ENCODE measurements at regions of chr5 and their contacts with region 1.

Region 1: GRCh38 chr5:82165740-82166530 is 112.2 kb downstream of the RPS23 start:
- DNase-seq: peak; percentile 39
- ATAC-seq: peak; percentile 92
- H3K4me3 ChIP-seq: no peak overlapping the region
- H3K27ac ChIP-seq: no peak overlapping the region; the same call in 1 of the 2 replicates
- H3K4me1 ChIP-seq: peaks cover 12% of the 10 kb centered on the region; the same call in 1 of the 2 replicates
- H3K27me3 ChIP-seq: no peaks in the 10 kb centered on the region
- CTCF ChIP-seq: peak; percentile 64 to 90 (median 67)
- EP300 ChIP-seq: no peak
- POLR2A ChIP-seq: no peak
- RAD21 ChIP-seq: peak; percentile 95

Region 2: GRCh38 chr5:81425569-81425968 is 740.4 kb before region 1 on chr5:
- CTCF ChIA-PET with region 1: interaction called, 87 read pairs
- POLR2A ChIA-PET with region 1: interaction called, 7 read pairs
- RAD21 ChIA-PET with region 1: interaction called, 97 read pairs
- SMC1A ChIA-PET with region 1: interaction called, 95 read pairs
- in situ Hi-C with region 1: no loop called
- intact Hi-C with region 1: loop called (anchors 1 kb)
- DNase-seq: no peak
- ATAC-seq: peak; percentile 84
- H3K4me3 ChIP-seq: no peak overlapping the region
- H3K27ac ChIP-seq: no peak overlapping the region
- H3K4me1 ChIP-seq: no peaks in the 10 kb centered on the region
- H3K27me3 ChIP-seq: no peaks in the 10 kb centered on the region
- CTCF ChIP-seq: peak; percentile 36 to 55 (median 48); a peak in 4 of 6 replicates
- EP300 ChIP-seq: no peak
- POLR2A ChIP-seq: no peak
- RAD21 ChIP-seq: peak; percentile 60

Region 3: DNA sequence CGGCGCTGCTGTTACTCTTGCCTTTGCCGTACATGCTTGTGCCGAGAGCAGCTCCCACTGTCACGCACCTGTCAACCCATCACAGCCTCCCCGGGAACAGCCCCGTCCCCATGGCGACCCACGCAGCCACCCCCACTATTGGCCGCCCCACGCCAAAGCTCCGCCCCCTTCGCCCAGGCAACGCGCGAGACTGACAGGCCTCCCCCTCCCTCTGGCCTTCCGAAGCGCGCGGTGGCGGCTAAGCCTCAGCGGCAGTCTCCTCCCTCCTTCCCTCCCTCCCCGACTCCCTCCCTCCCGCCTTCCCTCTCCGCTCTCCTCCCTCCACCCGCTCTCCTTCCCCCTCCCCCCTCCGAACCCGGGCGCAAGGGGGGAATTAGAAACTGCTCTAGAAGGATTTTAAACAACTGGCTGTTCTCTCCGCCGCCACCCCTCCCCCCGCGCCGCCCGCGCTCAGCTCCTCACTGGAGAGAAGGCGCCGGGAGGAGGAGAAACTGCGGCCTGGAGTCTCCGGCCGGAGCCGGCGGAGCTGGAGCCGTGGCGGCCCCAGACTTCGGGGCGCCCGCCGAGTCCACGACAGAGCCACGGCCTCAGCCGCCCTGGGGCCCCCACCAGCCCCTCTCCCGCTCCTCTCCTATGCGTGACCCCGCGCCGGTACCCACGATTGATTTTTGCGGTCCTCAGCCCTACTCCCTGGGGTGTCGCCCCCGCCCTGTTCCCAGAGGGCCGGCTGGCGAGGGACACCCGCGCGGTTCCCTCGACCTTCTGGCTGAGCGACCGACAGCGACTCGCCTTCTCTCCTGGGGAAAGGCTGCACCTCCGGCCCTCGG is 414.7 kb before region 1 on chr5 and contains the start of gene SSBP2:
- CTCF ChIA-PET with region 1: interaction called, 6 read pairs
- POLR2A ChIA-PET with region 1: interaction called, 9 read pairs
- RAD21 ChIA-PET with region 1: interaction called, 46 read pairs
- SMC1A ChIA-PET with region 1: interaction called, 26 read pairs
- in situ Hi-C with region 1: no loop called
- intact Hi-C with region 1: loop called (anchors 2 kb)
- DNase-seq: peak; percentile 95
- ATAC-seq: peak; percentile 82
- H3K4me3 ChIP-seq: peak within 1 kb of the TSS; percentile 81
- H3K27ac ChIP-seq: peak within 1 kb of the TSS; percentile 95
- H3K4me1 ChIP-seq: peaks cover 10% of the 10 kb centered on the region
- H3K27me3 ChIP-seq: no peaks in the 10 kb centered on the region
- CTCF ChIP-seq: no peak
- EP300 ChIP-seq: peak; percentile 60 to 99; a peak in 3 of 4 replicates
- POLR2A ChIP-seq: peak; percentile 85
- RAD21 ChIP-seq: peak; percentile 50
- polyA plus RNA-seq, gene SSBP2: 117 to 120 TPM

Region 4: DNA sequence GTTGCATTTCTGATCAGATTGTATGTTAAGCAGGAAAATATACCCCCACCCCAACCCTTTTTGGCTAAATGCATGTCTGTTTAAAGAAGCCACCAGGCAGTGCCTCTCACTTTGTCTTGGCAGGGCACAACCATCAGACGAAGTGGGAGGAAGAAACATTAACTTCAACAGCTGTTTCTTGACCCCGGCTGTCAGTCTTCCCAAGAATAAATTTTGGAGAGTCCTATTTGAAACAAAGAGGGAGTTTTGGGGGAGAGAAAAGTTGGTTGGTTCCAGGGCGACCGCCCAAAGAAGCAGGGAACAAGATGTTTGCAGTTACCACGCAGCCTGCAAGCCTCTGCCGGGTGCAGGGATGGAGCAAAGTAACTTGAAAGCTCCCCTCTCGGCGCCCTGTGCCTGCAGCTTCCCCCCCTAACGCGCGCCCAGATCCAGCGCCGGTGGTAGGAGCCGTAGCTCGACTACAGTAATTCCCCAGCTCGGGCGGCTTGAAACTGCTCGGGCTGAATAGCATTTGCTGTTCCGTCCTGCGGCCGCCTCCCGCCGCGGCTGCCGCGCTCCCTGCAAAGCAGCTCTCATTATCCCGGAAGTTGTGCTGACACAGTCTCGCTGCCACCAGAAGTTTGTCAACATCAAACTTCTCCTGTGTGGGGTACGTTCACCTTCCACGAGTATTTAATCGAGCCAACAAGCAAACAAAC is 314.3 kb before region 1 on chr5:
- CTCF ChIA-PET with region 1: interaction called, 35 read pairs
- POLR2A ChIA-PET with region 1: interaction called, 6 read pairs
- RAD21 ChIA-PET with region 1: interaction called, 29 read pairs
- SMC1A ChIA-PET with region 1: interaction called, 31 read pairs
- in situ Hi-C with region 1: no loop called
- intact Hi-C with region 1: loop called (anchors 2 kb)
- DNase-seq: peak; percentile 77
- ATAC-seq: peak; percentile 87
- H3K4me3 ChIP-seq: peak overlapping the region; percentile 55
- H3K27ac ChIP-seq: peak overlapping the region; percentile 87
- H3K4me1 ChIP-seq: peaks cover 26% of the 10 kb centered on the region
- H3K27me3 ChIP-seq: no peaks in the 10 kb centered on the region
- CTCF ChIP-seq: no peak
- EP300 ChIP-seq: peak; percentile 45 to 99; a peak in 3 of 4 replicates
- POLR2A ChIP-seq: peak; percentile 86
- RAD21 ChIP-seq: peak; percentile 31; the same call in 1 of the 2 replicates

Region 5: GRCh38 chr5:82100303-82101077 is 65.4 kb before region 1 on chr5:
- CTCF ChIA-PET with region 1: interaction called, 113 read pairs
- POLR2A ChIA-PET with region 1: interaction called, 3 read pairs
- RAD21 ChIA-PET with region 1: interaction called, 76 read pairs
- SMC1A ChIA-PET with region 1: interaction called, 109 read pairs
- in situ Hi-C with region 1: no loop called
- intact Hi-C with region 1: no loop called
- DNase-seq: peak; percentile 59
- ATAC-seq: peak; percentile 97
- H3K4me3 ChIP-seq: no peak overlapping the region
- H3K27ac ChIP-seq: peak overlapping the region; percentile 21; the same call in 1 of the 2 replicates
- H3K4me1 ChIP-seq: peaks cover 10% of the 10 kb centered on the region; the same call in 1 of the 2 replicates
- H3K27me3 ChIP-seq: no peaks in the 10 kb centered on the region
- CTCF ChIP-seq: no peak
- EP300 ChIP-seq: peak in 1 of 2 experiments; percentile 28; a peak in 1 of 4 replicates
- POLR2A ChIP-seq: no peak
- RAD21 ChIP-seq: no peak

Region 6: GRCh38 chr5:82154776-82155175 is 11.2 kb before region 1 on chr5:
- CTCF ChIA-PET with region 1: interaction called, 10 read pairs
- POLR2A ChIA-PET with region 1: no interaction called
- RAD21 ChIA-PET with region 1: interaction called, 8 read pairs
- SMC1A ChIA-PET with region 1: interaction called, 12 read pairs
- in situ Hi-C with region 1: no loop called
- intact Hi-C with region 1: no loop called
- DNase-seq: no peak
- ATAC-seq: no peak
- H3K4me3 ChIP-seq: no peak overlapping the region
- H3K27ac ChIP-seq: no peak overlapping the region
- H3K4me1 ChIP-seq: no peaks in the 10 kb centered on the region
- H3K27me3 ChIP-seq: no peaks in the 10 kb centered on the region
- CTCF ChIP-seq: no peak
- EP300 ChIP-seq: no peak
- POLR2A ChIP-seq: no peak
- RAD21 ChIP-seq: no peak

Measured in GM12878 (cell line).